Ascending aorta (tissue), 2 donors: ENCODE measurements at regions of chr1 and their contacts with region 1.

Region 1: DNA sequence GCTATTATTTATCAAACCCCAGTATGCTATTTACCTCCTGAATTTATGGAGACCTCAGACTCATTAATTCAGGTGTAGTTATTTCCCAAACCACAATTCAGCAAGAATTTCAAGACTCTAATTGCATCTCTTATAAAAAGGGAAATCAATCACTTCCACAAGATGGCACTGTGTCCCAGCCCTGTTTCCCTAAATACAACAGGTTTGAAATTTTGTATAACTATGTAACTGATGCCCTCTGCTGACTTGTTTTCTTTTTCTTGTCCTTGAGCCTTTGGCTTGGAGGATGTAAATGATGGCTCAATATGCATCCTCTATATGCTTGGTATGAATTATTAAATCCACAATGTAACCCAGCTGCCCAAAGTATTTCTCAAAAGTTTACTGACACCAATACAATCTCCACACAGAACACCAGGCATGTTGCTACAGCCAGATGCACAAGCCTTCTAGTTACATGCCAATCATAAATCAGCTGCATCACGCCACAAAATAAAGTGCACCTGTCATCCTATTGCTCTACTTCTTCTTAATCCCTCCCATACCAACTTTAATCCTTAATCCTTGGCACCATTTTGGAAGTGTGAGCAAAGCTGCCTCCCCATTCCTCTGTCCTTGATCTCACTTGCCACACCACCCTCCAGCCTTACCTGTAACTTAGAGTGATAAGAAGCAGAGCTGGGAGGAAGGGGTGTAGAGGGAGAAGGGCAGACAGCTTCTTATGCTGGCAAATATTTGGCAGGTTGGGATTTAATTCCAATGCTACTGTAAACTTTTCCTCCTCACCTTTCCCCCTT is 9.0 kb downstream of the C1orf105 start:
- DNase-seq: no peak
- H3K4me3 ChIP-seq: no peak overlapping the region
- H3K27ac ChIP-seq: no peak overlapping the region
- H3K4me1 ChIP-seq: no peaks in the 10 kb centered on the region
- H3K27me3 ChIP-seq: no peaks in the 10 kb centered on the region
- CTCF ChIP-seq: peak; percentile 36 to 69 (median 58)

Region 2: GRCh38 chr1:172002725-172003345 is 426.7 kb before region 1 on chr1:
- intact Hi-C with region 1: loop called (anchors 5 kb)
- DNase-seq: no peak
- H3K4me3 ChIP-seq: no peak overlapping the region
- H3K27ac ChIP-seq: no peak overlapping the region
- H3K4me1 ChIP-seq: no peaks in the 10 kb centered on the region
- H3K27me3 ChIP-seq: no peaks in the 10 kb centered on the region
- CTCF ChIP-seq: peak in 2 of 3 experiments; percentile 66 to 78

Region 3: GRCh38 chr1:172041742-172042141 is 387.8 kb before region 1 on chr1:
- intact Hi-C with region 1: loop called (anchors 1 kb)
- DNase-seq: no peak
- H3K4me3 ChIP-seq: peak overlapping the region in 1 of 2 donors; percentile 13
- H3K27ac ChIP-seq: no peak overlapping the region
- H3K4me1 ChIP-seq: no peaks in the 10 kb centered on the region
- H3K27me3 ChIP-seq: no peaks in the 10 kb centered on the region
- CTCF ChIP-seq: peak in 2 of 3 experiments; percentile 38 to 58

Region 4: DNA sequence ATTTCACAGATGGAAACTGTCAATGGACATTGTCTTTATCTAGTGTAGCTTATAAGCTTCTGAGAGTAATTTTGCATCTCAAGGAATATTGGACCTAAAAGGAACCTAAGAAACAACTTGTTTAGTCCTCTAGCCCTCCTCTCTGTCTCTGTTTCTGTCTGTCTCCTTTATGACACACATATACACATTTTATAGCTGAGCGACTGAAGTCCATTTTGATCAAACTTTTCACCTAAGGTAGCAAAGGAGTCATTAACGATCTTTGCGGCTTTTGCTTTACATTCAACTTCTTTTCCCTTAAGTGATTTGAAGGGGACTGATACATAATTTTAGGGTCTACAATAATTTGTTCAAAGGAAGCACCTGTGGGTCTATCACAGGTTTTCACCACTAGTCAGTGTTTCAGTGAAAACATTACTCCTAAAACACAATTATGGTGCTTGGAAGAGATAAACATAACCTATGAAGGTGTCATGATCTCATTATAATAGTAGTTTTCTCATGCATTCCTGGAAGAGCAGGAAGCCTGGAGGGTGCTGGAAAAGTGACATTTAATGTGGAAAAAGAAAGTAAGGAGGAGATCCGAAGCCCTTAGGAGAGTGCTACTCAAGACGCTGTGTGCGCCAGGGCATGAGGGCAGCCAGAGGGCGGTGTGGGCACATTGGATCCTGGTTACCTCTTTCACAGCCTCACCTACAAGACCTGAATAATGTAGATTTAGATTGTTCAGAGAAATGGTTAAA is 339.6 kb before region 1 on chr1:
- intact Hi-C with region 1: loop called (anchors 5 kb)
- DNase-seq: peak in 1 of 2 donors; percentile 71
- H3K4me3 ChIP-seq: no peak overlapping the region
- H3K27ac ChIP-seq: no peak overlapping the region
- H3K4me1 ChIP-seq: no peaks in the 10 kb centered on the region
- H3K27me3 ChIP-seq: no peaks in the 10 kb centered on the region
- CTCF ChIP-seq: peak; percentile 49 to 76 (median 51)